PC-3 (cell line): ENCODE measurements at regions of chrX and their contacts with region 1.

Region 1: GRCh38 chrX:40922307-40922706 is 162.9 kb upstream of the USP9X start:
- DNase-seq: peak; percentile 81
- ATAC-seq: peak; percentile 55
- H3K4me3 ChIP-seq: peak overlapping the region; percentile 35; the same call in 1 of the 2 replicates
- H3K27ac ChIP-seq: no peak overlapping the region
- H3K4me1 ChIP-seq: peaks cover 15% of the 10 kb centered on the region
- H3K27me3 ChIP-seq: no peaks in the 10 kb centered on the region
- CTCF ChIP-seq: peak; percentile 68

Region 2: DNA sequence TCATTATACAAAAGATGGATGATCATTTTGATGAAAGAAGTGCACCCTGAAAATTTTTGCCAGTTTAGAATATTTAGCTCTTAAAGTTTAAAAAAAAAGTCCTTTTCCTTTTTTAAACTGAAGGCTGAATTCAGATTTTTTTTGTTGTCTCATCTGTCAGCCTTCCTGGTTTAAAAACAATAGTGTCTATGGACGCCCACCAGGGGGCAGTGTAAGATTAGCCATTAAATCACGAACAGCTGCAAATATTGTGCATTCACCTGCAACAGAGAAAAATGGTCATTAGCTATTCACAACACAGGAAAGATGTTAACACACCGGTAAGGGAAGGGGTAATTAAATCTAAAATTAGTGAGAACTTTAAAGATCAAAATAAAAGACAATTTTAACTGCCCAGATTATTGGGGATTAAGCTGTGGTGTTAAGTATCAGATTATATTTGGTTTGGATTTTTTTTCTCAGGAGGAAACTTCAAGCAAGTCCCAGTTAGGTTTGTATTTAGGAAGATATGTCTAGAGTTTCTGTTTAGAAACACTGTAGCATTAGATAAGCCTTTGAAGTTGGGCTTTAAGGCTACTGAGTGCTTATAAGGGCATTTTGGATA is 270.6 kb before region 1 on chrX:
- CTCF ChIA-PET with region 1: no interaction called
- POLR2A ChIA-PET with region 1: no interaction called
- intact Hi-C with region 1: loop called (anchors 5 kb)
- DNase-seq: peak; percentile 69
- ATAC-seq: no peak
- H3K4me3 ChIP-seq: no peak overlapping the region
- H3K27ac ChIP-seq: no peak overlapping the region
- H3K4me1 ChIP-seq: no peaks in the 10 kb centered on the region
- H3K27me3 ChIP-seq: no peaks in the 10 kb centered on the region
- CTCF ChIP-seq: peak; percentile 82

Region 3: DNA sequence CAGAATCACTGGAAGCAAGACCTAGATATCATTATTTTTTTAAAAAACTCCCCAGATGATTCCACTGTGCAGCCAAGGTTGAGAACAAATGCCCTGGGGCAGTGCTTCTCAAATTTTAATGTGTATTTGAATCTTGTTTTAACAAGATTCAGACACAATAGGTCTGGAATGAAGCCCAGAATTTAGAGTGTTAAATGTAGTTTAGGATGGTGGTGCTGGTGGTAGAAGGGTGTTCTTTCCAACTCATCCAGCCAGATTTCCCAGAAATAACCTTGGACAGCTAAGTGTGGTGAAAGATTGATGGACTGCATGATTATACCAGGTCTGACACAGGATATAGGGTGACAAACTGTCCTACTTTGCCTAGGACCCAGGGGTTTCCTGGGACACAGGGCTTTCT is 66.9 kb before region 1 on chrX:
- CTCF ChIA-PET with region 1: no interaction called
- POLR2A ChIA-PET with region 1: no interaction called
- intact Hi-C with region 1: no loop called
- DNase-seq: peak; percentile 94
- ATAC-seq: peak; percentile 88
- H3K4me3 ChIP-seq: no peak overlapping the region
- H3K27ac ChIP-seq: 0 out of 2 replicates have a peak overlapping the region, but pooled peaks have one; percentile 6
- H3K4me1 ChIP-seq: peaks cover 6% of the 10 kb centered on the region
- H3K27me3 ChIP-seq: no peaks in the 10 kb centered on the region
- CTCF ChIP-seq: no peak